Gastrocnemius medialis (tissue), 4 donors: ENCODE measurements at regions of chr10 and their contacts with region 1.

Region 1: GRCh38 chr10:23351914-23352755 is 7.5 kb upstream of the C10orf67 start:
- DNase-seq: no peak
- ATAC-seq: no peak
- H3K4me3 ChIP-seq: no peak overlapping the region
- H3K27ac ChIP-seq: no peak overlapping the region
- H3K4me1 ChIP-seq: peaks cover 9 to 11% of the 10 kb centered on the region in 2 donors
- H3K27me3 ChIP-seq: no peaks in the 10 kb centered on the region
- CTCF ChIP-seq: no peak
- POLR2A ChIP-seq: no peak

Region 2: GRCh38 chr10:23399701-23400144 is 47.6 kb after region 1 on chr10:
- in situ Hi-C with region 1: no loop called
- intact Hi-C with region 1: loop called (anchors 5 kb)
- DNase-seq: peak; percentile 89 to 94
- ATAC-seq: peak; percentile 96
- H3K4me3 ChIP-seq: no peak overlapping the region
- H3K27ac ChIP-seq: peak overlapping the region; percentile 74 to 86 (median 82)
- H3K4me1 ChIP-seq: peaks cover 26 to 37% of the 10 kb centered on the region in 2 donors
- H3K27me3 ChIP-seq: no peaks in the 10 kb centered on the region
- CTCF ChIP-seq: no peak
- POLR2A ChIP-seq: peak in 1 of 2 donors; percentile 48

Region 3: GRCh38 chr10:23613900-23614299 is 261.8 kb after region 1 on chr10:
- in situ Hi-C with region 1: no loop called
- intact Hi-C with region 1: no loop called
- DNase-seq: no peak
- ATAC-seq: no peak
- H3K4me3 ChIP-seq: no peak overlapping the region
- H3K27ac ChIP-seq: no peak overlapping the region
- H3K4me1 ChIP-seq: no peaks in the 10 kb centered on the region
- H3K27me3 ChIP-seq: no peaks in the 10 kb centered on the region
- CTCF ChIP-seq: no peak
- POLR2A ChIP-seq: no peak